Heart left ventricle (tissue), 16 donors: ENCODE measurements at regions of chr11 and their contacts with region 1.

Region 1: DNA sequence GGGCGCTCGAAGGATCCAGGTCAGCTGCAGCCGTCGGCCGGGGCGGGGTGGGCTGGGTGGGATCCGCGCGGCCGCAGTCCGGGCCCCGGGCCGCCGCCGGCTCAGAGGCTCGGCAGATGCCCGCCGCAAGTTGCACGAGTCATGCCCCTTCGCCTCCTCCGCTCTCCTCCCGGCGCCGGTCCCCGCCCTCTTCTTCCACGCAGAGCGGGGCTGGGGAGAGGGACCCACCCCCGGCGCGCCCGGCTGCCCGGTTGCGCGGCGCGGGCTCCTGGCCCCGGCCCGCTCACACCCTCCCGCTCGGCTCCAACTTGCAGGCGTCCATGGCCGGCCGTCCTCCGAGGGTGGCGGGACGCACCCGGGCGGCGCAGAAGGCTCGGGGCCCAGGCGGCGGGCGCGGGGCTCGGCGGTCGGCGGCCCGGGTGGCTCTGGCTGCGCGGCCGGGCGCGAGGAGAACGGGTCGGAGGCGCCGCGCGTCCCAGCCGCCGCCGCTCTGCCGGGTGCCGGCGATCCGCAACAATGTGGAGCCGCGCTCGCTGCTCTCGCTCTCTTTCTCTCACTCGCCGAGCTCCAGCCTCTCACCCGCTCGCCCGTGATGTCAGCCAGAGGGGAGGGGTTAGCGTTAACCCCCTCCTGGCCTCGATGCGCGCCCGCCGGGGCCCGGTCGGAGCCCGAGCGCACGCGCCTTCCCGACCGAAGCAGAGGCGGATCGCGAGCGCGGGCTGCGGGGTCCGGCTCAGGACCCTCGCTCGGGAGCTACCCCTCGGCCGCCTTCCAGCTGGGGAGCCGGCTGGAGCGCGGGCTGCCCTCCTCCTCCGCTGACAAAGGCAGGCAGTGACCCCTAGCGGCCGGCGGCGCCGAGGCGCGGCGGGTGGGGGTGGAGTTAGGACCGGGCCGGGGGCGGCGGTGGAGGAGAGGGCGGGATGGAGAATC is at the start of gene NECTIN1:
- DNase-seq: peak; percentile 89 to 95 (median 91)
- ATAC-seq: peak; percentile 78 to 94 (median 92)
- H3K4me3 ChIP-seq: peak within 1 kb of the TSS; percentile 78 to 96 (median 85)
- H3K27ac ChIP-seq: peak within 1 kb of the TSS; percentile 65 to 90 (median 87)
- H3K4me1 ChIP-seq: peaks cover 0 to 33% (median 25%) of the 10 kb centered on the region in 12 donors
- H3K27me3 ChIP-seq: peaks cover 0 to 10% (median 0%) of the 10 kb centered on the region in 9 donors
- CTCF ChIP-seq: peak; percentile 90 to 100 (median 98)
- POLR2A ChIP-seq: peak in 1 of 2 donors; percentile 79
- total RNA-seq, gene NECTIN1: 7.2 to 28.6 (median 19.5) TPM

Region 2: GRCh38 chr11:119481021-119481666 is 247.8 kb before region 1 on chr11:
- intact Hi-C with region 1: loop called in 6 of 10 experiments (anchors 5 to 10 kb)
- DNase-seq: peak; percentile 70 to 87 (median 79)
- ATAC-seq: peak; percentile 64 to 93 (median 82)
- H3K4me3 ChIP-seq: no peak overlapping the region
- H3K27ac ChIP-seq: no peak overlapping the region
- H3K4me1 ChIP-seq: peaks cover 0 to 9% (median 2%) of the 10 kb centered on the region in 12 donors
- H3K27me3 ChIP-seq: peaks cover 0 to 6% (median 0%) of the 10 kb centered on the region in 9 donors
- CTCF ChIP-seq: peak; percentile 91 to 99 (median 96)
- POLR2A ChIP-seq: no peak

Region 3: DNA sequence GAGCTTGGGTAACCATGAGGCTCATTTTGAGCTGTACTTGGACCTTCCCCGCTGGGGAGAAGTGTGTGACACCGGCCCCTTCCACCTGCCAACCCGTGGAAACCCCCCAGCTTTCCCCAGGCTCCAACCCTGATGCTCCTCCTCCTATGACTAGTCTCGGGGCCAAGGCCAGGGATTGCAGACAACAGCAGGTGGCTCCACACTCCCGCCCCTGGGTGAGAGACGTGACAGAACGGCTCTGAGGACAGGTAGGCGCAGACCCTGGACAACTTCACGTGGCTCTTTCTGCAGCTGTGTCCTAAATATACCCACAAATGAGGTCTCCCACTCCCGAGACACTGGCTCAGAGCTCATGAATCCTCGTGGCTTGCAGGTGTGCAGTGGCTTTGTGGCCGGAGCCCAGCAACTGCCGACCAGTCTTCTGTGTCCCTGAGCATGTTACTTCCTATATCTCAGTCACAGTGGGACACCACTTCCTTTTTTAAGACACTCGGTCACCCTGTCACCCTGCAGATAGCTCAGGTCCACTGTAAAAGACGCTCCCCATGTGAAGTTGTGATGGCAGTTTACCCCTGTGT is 55.1 kb before region 1 on chr11:
- intact Hi-C with region 1: loop called in 4 of 10 experiments (anchors 1 to 5 kb)
- DNase-seq: no peak
- ATAC-seq: no peak
- H3K4me3 ChIP-seq: no peak overlapping the region
- H3K27ac ChIP-seq: peak overlapping the region in 1 of 12 donors; percentile 54
- H3K4me1 ChIP-seq: peaks cover 0 to 33% (median 21%) of the 10 kb centered on the region in 12 donors
- H3K27me3 ChIP-seq: no peaks in the 10 kb centered on the region
- CTCF ChIP-seq: no peak
- POLR2A ChIP-seq: no peak

Region 4: DNA sequence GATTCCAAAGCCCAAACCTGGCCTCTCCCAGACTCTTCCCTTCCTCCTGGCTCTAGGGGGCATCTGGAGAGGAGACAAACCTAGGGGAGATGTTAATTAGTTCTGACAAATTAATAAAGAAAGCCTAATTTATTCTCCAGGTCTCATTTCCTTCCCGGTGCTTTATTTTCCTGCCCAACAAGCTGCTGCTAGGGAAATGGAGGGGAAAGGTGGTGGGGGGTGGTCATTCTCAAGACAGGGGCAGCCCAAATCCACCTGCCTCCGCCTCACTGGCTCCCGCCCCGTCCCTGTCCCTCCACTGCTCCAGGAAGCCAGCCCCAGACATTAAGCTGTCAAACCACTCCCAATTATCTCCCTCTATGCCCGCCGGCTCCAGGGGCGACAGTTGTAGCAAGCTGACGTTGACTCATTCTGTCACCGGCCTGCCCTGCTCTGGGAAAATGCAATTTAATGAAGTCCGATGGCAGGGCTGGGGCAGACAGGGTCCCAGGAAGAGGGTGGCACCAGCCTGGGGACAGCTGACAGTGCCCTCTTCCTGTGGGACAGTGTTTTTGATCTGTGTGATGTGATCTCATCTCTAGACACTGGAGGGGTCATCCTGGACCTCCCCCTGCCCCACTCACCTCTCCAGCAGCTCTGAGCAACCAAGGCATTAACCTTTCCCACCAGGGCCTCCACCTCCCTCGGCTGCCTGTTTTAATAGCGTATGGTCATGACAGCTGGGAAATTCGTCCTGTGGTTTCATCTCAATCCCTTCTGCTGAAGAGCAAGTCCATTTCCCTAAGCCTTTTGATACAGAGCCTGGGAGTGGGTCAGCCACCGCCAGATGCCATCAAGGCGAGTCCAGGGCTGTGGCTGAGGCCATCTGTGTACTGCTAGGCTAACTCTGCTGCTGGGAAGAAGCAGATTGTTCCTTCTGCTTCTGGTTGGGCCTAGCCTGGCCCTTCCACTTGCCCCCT is 27.0 kb before region 1 on chr11:
- intact Hi-C with region 1: loop called in 1 of 10 experiments (anchors 2 kb)
- DNase-seq: no peak
- ATAC-seq: no peak
- H3K4me3 ChIP-seq: no peak overlapping the region
- H3K27ac ChIP-seq: peak overlapping the region in 2 of 12 donors; percentile 31 to 42
- H3K4me1 ChIP-seq: peaks cover 12 to 50% (median 29%) of the 10 kb centered on the region in 12 donors
- H3K27me3 ChIP-seq: no peaks in the 10 kb centered on the region
- CTCF ChIP-seq: no peak
- POLR2A ChIP-seq: no peak

Region 5: GRCh38 chr11:120108154-120108865 is 379.4 kb after region 1 on chr11:
- intact Hi-C with region 1: loop called in 6 of 10 experiments (anchors 5 to 10 kb)
- DNase-seq: peak; percentile 46 to 83 (median 63)
- ATAC-seq: peak; percentile 65 to 92 (median 83)
- H3K4me3 ChIP-seq: no peak overlapping the region
- H3K27ac ChIP-seq: no peak overlapping the region
- H3K4me1 ChIP-seq: no peaks in the 10 kb centered on the region
- H3K27me3 ChIP-seq: peaks cover 0 to 14% (median 0%) of the 10 kb centered on the region in 9 donors
- CTCF ChIP-seq: peak; percentile 96 to 100 (median 99)
- POLR2A ChIP-seq: no peak